ENCODE measurements at regions of chr6 and their contacts with region 1.

Region 1: GRCh38 chr6:7238900-7239589 is 74.0 kb downstream of the SSR1 start:
- DNase-seq: no peak
- ATAC-seq: peak; percentile 74
- H3K4me3 ChIP-seq: no peak overlapping the region
- H3K27ac ChIP-seq: peak overlapping the region; percentile 38
- H3K4me1 ChIP-seq: peaks cover 71% of the 10 kb centered on the region
- H3K27me3 ChIP-seq: no peaks in the 10 kb centered on the region
- CTCF ChIP-seq: peak; percentile 71 to 87 (median 79)
- EP300 ChIP-seq: no peak
- POLR2A ChIP-seq: peak; percentile 41; the same call in 1 of the 2 replicates
- RAD21 ChIP-seq: peak; percentile 56

Region 2: GRCh38 chr6:6686748-6687601 is 552.1 kb before region 1 on chr6:
- CTCF ChIA-PET with region 1: interaction called, 7 read pairs
- POLR2A ChIA-PET with region 1: no interaction called
- RAD21 ChIA-PET with region 1: interaction called, 4 read pairs
- SMC1A ChIA-PET with region 1: interaction called, 22 read pairs
- in situ Hi-C with region 1: no loop called
- intact Hi-C with region 1: no loop called
- DNase-seq: no peak
- ATAC-seq: no peak
- H3K4me3 ChIP-seq: no peak overlapping the region
- H3K27ac ChIP-seq: no peak overlapping the region
- H3K4me1 ChIP-seq: peaks cover 38% of the 10 kb centered on the region
- H3K27me3 ChIP-seq: no peaks in the 10 kb centered on the region
- CTCF ChIP-seq: no peak
- EP300 ChIP-seq: no peak
- POLR2A ChIP-seq: no peak
- RAD21 ChIP-seq: no peak

Region 3: GRCh38 chr6:6724539-6725467 is 514.2 kb before region 1 on chr6:
- CTCF ChIA-PET with region 1: interaction called, 40 read pairs
- POLR2A ChIA-PET with region 1: no interaction called
- RAD21 ChIA-PET with region 1: interaction called, 5 read pairs
- SMC1A ChIA-PET with region 1: interaction called, 8 read pairs
- in situ Hi-C with region 1: no loop called
- intact Hi-C with region 1: loop called (anchors 2 kb)
- DNase-seq: no peak
- ATAC-seq: peak; percentile 91
- H3K4me3 ChIP-seq: peak overlapping the region; percentile 37; the same call in 1 of the 2 replicates
- H3K27ac ChIP-seq: no peak overlapping the region
- H3K4me1 ChIP-seq: peaks cover 11% of the 10 kb centered on the region
- H3K27me3 ChIP-seq: no peaks in the 10 kb centered on the region
- CTCF ChIP-seq: peak; percentile 65 to 82 (median 70)
- EP300 ChIP-seq: no peak
- POLR2A ChIP-seq: no peak
- RAD21 ChIP-seq: peak; percentile 87

Region 4: GRCh38 chr6:6788394-6789020 is 450.5 kb before region 1 on chr6:
- CTCF ChIA-PET with region 1: interaction called, 11 read pairs
- POLR2A ChIA-PET with region 1: interaction called, 6 read pairs
- RAD21 ChIA-PET with region 1: interaction called, 5 read pairs
- SMC1A ChIA-PET with region 1: interaction called, 5 read pairs
- in situ Hi-C with region 1: no loop called
- intact Hi-C with region 1: no loop called
- DNase-seq: no peak
- ATAC-seq: peak; percentile 92
- H3K4me3 ChIP-seq: no peak overlapping the region
- H3K27ac ChIP-seq: no peak overlapping the region
- H3K4me1 ChIP-seq: no peaks in the 10 kb centered on the region
- H3K27me3 ChIP-seq: no peaks in the 10 kb centered on the region
- CTCF ChIP-seq: peak; percentile 48 to 83 (median 78)
- EP300 ChIP-seq: no peak
- POLR2A ChIP-seq: no peak
- RAD21 ChIP-seq: peak; percentile 90

Region 5: GRCh38 chr6:6918216-6918983 is 320.6 kb before region 1 on chr6:
- CTCF ChIA-PET with region 1: interaction called, 14 read pairs
- POLR2A ChIA-PET with region 1: no interaction called
- RAD21 ChIA-PET with region 1: interaction called, 4 read pairs
- SMC1A ChIA-PET with region 1: interaction called, 6 read pairs
- in situ Hi-C with region 1: no loop called
- intact Hi-C with region 1: loop called (anchors 5 kb)
- DNase-seq: peak; percentile 91
- ATAC-seq: peak; percentile 96
- H3K4me3 ChIP-seq: no peak overlapping the region
- H3K27ac ChIP-seq: peak overlapping the region; percentile 30; the same call in 1 of the 2 replicates
- H3K4me1 ChIP-seq: peaks cover 27% of the 10 kb centered on the region
- H3K27me3 ChIP-seq: no peaks in the 10 kb centered on the region
- CTCF ChIP-seq: no peak
- EP300 ChIP-seq: peak; percentile 99
- POLR2A ChIP-seq: no peak
- RAD21 ChIP-seq: peak; percentile 31; the same call in 1 of the 2 replicates

Region 6: GRCh38 chr6:7140631-7141378 is 98.2 kb before region 1 on chr6:
- CTCF ChIA-PET with region 1: interaction called, 6 read pairs
- POLR2A ChIA-PET with region 1: interaction called, 13 read pairs
- RAD21 ChIA-PET with region 1: interaction called, 4 read pairs
- SMC1A ChIA-PET with region 1: interaction called, 8 read pairs
- in situ Hi-C with region 1: no loop called
- intact Hi-C with region 1: no loop called
- DNase-seq: no peak
- ATAC-seq: peak; percentile 74
- H3K4me3 ChIP-seq: peak overlapping the region; percentile 81
- H3K27ac ChIP-seq: peak overlapping the region; percentile 87
- H3K4me1 ChIP-seq: peaks cover 85% of the 10 kb centered on the region
- H3K27me3 ChIP-seq: no peaks in the 10 kb centered on the region
- CTCF ChIP-seq: no peak
- EP300 ChIP-seq: no peak
- POLR2A ChIP-seq: peak; percentile 82
- RAD21 ChIP-seq: no peak

Region 7: DNA sequence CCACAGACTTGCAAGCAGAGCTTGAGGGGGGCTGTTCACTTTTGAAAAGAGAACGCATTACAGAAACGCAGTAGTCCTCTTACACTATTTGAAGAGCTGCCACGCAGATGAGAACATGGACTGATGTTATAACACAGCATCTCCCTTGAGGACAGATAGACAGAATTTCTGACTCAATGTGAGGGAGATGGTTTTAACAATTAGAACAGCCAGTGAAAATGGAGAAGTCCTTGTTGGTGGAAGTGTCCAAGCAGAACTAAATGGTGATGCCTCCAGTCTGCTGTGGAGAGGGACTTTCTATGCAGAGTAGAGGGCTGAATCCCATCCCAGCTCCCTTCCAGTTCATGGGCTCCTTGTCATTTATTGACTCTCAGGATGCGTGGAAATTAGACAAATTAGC is 31.3 kb before region 1 on chr6:
- CTCF ChIA-PET with region 1: interaction called, 5 read pairs
- POLR2A ChIA-PET with region 1: interaction called, 4 read pairs
- RAD21 ChIA-PET with region 1: interaction called, 5 read pairs
- SMC1A ChIA-PET with region 1: interaction called, 13 read pairs
- in situ Hi-C with region 1: no loop called
- intact Hi-C with region 1: no loop called
- DNase-seq: no peak
- ATAC-seq: no peak
- H3K4me3 ChIP-seq: no peak overlapping the region
- H3K27ac ChIP-seq: peak overlapping the region; percentile 8; the same call in 1 of the 2 replicates
- H3K4me1 ChIP-seq: peaks cover 16% of the 10 kb centered on the region
- H3K27me3 ChIP-seq: no peaks in the 10 kb centered on the region
- CTCF ChIP-seq: no peak
- EP300 ChIP-seq: no peak
- POLR2A ChIP-seq: no peak
- RAD21 ChIP-seq: no peak

Region 8: GRCh38 chr6:7805850-7806214 is 566.8 kb after region 1 on chr6:
- CTCF ChIA-PET with region 1: no interaction called
- POLR2A ChIA-PET with region 1: no interaction called
- RAD21 ChIA-PET with region 1: no interaction called
- SMC1A ChIA-PET with region 1: no interaction called
- in situ Hi-C with region 1: no loop called
- intact Hi-C with region 1: no loop called
- DNase-seq: no peak
- ATAC-seq: no peak
- H3K4me3 ChIP-seq: no peak overlapping the region
- H3K27ac ChIP-seq: no peak overlapping the region
- H3K4me1 ChIP-seq: no peaks in the 10 kb centered on the region
- H3K27me3 ChIP-seq: peaks cover 1 to 6% of the 10 kb centered on the region in 2 experiments; a peak in 3 of 4 replicates
- CTCF ChIP-seq: no peak
- EP300 ChIP-seq: no peak
- POLR2A ChIP-seq: no peak
- RAD21 ChIP-seq: no peak

Measured in GM12878 (cell line).